Naive thymus-derived CD4-positive, alpha-beta T cell (primary cell): ENCODE measurements at regions of chr16 and their contacts with region 1.

Region 1: GRCh38 chr16:66872943-66873684 is 7.2 kb upstream of the PDP2 start:
- DNase-seq: peak; percentile 62 to 93 (median 77)
- ATAC-seq: peak; percentile 95
- H3K4me3 ChIP-seq: peak overlapping the region; percentile 48
- H3K4me3 Mint-ChIP-seq: peak overlapping the region; percentile 77 to 94 (median 82)
- H3K27ac ChIP-seq: peak overlapping the region; percentile 18
- H3K27ac Mint-ChIP-seq: peak overlapping the region; percentile 7 to 93 (median 60)
- H3K4me1 ChIP-seq: peaks cover 5 to 6% of the 10 kb centered on the region in 2 donors
- H3K4me1 Mint-ChIP-seq: peaks cover 7 to 49% (median 14%) of the 10 kb centered on the region in 7 donors
- H3K27me3 ChIP-seq: no peaks in the 10 kb centered on the region
- H3K27me3 Mint-ChIP-seq: no peaks in the 10 kb centered on the region

Region 2: GRCh38 chr16:66483689-66484481 is 389.2 kb before region 1 on chr16:
- CTCF ChIA-PET with region 1: no interaction called
- POLR2A ChIA-PET with region 1: no interaction called
- intact Hi-C with region 1: loop called in 1 of 2 experiments (anchors 5 kb)
- DNase-seq: peak; percentile 55 to 79 (median 64)
- ATAC-seq: peak; percentile 84
- H3K4me3 ChIP-seq: no peak overlapping the region
- H3K4me3 Mint-ChIP-seq: peak overlapping the region in 1 of 10 donors; percentile 9
- H3K27ac ChIP-seq: no peak overlapping the region
- H3K27ac Mint-ChIP-seq: peak overlapping the region in 4 of 9 donors; percentile 44 to 88 (median 68)
- H3K4me1 ChIP-seq: peaks cover 7 to 8% of the 10 kb centered on the region in 2 donors
- H3K4me1 Mint-ChIP-seq: peaks cover 6 to 40% (median 17%) of the 10 kb centered on the region in 7 donors
- H3K27me3 ChIP-seq: no peaks in the 10 kb centered on the region
- H3K27me3 Mint-ChIP-seq: no peaks in the 10 kb centered on the region

Region 3: GRCh38 chr16:66562407-66562806 is 310.7 kb before region 1 on chr16:
- CTCF ChIA-PET with region 1: interaction called, 11 read pairs
- POLR2A ChIA-PET with region 1: no interaction called
- intact Hi-C with region 1: loop called in 1 of 2 experiments (anchors 1 kb)
- DNase-seq: peak in 4 of 9 donors; percentile 21 to 53 (median 34)
- ATAC-seq: peak; percentile 60
- H3K4me3 ChIP-seq: no peak overlapping the region
- H3K4me3 Mint-ChIP-seq: no peak overlapping the region
- H3K27ac ChIP-seq: no peak overlapping the region
- H3K27ac Mint-ChIP-seq: peak overlapping the region in 5 of 9 donors; percentile 14 to 71 (median 26)
- H3K4me1 ChIP-seq: peaks cover 22 to 46% of the 10 kb centered on the region in 2 donors
- H3K4me1 Mint-ChIP-seq: peaks cover 31 to 67% (median 41%) of the 10 kb centered on the region in 7 donors
- H3K27me3 ChIP-seq: no peaks in the 10 kb centered on the region
- H3K27me3 Mint-ChIP-seq: no peaks in the 10 kb centered on the region